B cell (primary cell): ENCODE measurements at regions of chr6 and their contacts with region 1.

Region 1: DNA sequence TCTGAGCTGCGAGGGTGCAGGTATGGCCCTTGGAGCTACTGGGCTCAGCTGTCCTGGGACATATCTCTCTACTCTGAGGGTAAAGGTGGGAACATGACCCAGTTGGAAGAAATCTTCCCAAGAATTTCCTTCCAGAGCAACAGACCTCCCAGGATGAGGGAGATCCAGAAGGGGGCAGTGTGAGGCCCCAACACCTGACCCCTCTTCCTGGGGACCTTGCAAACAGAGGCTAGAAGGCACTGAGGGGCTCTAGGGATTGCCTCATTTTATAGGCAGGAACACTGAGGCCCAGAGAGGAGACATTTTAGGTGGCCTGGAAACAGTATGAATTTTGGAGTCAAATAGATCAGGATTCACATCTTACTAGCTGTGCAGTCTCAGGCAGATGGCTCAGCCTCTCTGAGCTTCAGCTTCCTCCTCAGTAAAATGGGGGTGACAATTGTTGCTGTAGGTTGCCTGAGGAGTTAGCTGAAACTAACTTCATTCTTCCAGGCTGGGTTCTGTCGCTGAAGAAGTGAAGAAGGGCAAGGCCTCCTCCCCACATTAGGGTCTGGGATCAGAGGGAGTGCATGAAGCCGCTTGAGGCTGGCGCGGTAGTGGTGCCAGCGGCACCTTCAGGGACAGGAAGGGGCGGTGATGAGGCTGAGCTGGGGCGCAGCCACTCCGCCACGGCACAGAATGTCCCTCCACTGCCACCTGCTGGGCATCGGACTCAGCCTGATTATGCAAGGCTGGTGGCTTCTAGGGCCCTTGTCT is 11.4 kb downstream of the KCNK17 start:
- DNase-seq: peak; percentile 85
- ATAC-seq: peak; percentile 92
- H3K4me3 ChIP-seq: peak overlapping the region in 1 of 5 experiments; percentile 29
- H3K4me3 Mint-ChIP-seq: peak overlapping the region; percentile 74
- H3K27ac ChIP-seq: no peak overlapping the region
- H3K27ac Mint-ChIP-seq: no peak overlapping the region
- H3K4me1 ChIP-seq: peaks cover 4 to 7% of the 10 kb centered on the region in 2 donors
- H3K4me1 Mint-ChIP-seq: peaks cover 4% of the 10 kb centered on the region
- H3K27me3 ChIP-seq: peaks cover 0 to 4% (median 0%) of the 10 kb centered on the region in 4 experiments
- H3K27me3 Mint-ChIP-seq: peaks cover 13% of the 10 kb centered on the region
- CTCF ChIP-seq: peak; percentile 85

Region 2: GRCh38 chr6:38973178-38974054 is 329.4 kb before region 1 on chr6:
- CTCF ChIA-PET with region 1: interaction called, 10 read pairs
- POLR2A ChIA-PET with region 1: no interaction called
- intact Hi-C with region 1: loop called (anchors 1 kb)
- DNase-seq: peak; percentile 42
- ATAC-seq: peak; percentile 41
- H3K4me3 ChIP-seq: no peak overlapping the region
- H3K4me3 Mint-ChIP-seq: no peak overlapping the region
- H3K27ac ChIP-seq: no peak overlapping the region
- H3K27ac Mint-ChIP-seq: no peak overlapping the region
- H3K4me1 ChIP-seq: no peaks in the 10 kb centered on the region
- H3K4me1 Mint-ChIP-seq: no peaks in the 10 kb centered on the region
- H3K27me3 ChIP-seq: peaks cover 0 to under 1% (median 0%) of the 10 kb centered on the region in 4 experiments
- H3K27me3 Mint-ChIP-seq: peaks cover 11% of the 10 kb centered on the region
- CTCF ChIP-seq: peak; percentile 58

Region 3: GRCh38 chr6:38997128-38997761 is 305.6 kb before region 1 on chr6:
- CTCF ChIA-PET with region 1: interaction called, 21 read pairs
- POLR2A ChIA-PET with region 1: no interaction called
- intact Hi-C with region 1: no loop called
- DNase-seq: peak; percentile 27
- ATAC-seq: no peak
- H3K4me3 ChIP-seq: no peak overlapping the region
- H3K4me3 Mint-ChIP-seq: no peak overlapping the region
- H3K27ac ChIP-seq: no peak overlapping the region
- H3K27ac Mint-ChIP-seq: no peak overlapping the region
- H3K4me1 ChIP-seq: no peaks in the 10 kb centered on the region
- H3K4me1 Mint-ChIP-seq: no peaks in the 10 kb centered on the region
- H3K27me3 ChIP-seq: peaks cover 0 to 9% (median 2%) of the 10 kb centered on the region in 4 experiments
- H3K27me3 Mint-ChIP-seq: peaks cover 36% of the 10 kb centered on the region
- CTCF ChIP-seq: peak; percentile 60

Region 4: DNA sequence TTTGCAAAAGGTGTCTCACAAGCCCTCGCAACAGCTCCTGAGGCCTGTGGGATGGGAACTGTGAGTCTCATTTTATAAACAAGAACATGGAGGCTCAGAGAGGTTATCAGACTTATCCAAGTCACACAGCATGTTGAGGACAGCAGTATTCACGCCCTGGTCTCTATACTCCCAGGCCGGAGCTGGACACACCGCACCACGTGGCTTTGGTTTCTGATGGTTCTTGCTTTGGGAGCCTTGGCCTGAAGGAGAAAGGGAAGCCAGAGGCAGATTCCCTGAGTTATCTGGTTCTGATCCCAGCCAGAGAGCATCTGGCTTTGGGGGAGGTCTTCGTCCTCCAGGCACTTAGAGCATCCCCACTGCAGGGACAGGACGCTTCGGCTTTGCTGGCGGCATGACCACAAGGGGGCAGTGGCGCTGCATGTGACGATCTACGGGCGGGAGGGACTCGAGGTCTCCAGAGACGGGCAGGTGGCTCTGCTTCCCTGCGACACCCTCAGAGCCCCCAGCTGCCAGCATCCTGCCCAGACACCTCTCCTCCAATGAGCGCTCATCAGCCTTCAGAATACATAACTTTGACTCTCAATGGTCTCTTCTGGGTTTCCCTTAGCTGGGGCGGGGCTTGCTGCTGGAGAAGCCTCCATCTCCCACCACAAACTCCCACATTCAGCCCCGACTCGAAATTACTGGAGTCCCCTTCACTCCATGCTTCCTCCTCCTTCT is 136.5 kb before region 1 on chr6:
- CTCF ChIA-PET with region 1: interaction called, 241 read pairs
- POLR2A ChIA-PET with region 1: no interaction called
- intact Hi-C with region 1: no loop called
- DNase-seq: peak; percentile 83
- ATAC-seq: peak; percentile 78
- H3K4me3 ChIP-seq: no peak overlapping the region
- H3K4me3 Mint-ChIP-seq: no peak overlapping the region
- H3K27ac ChIP-seq: no peak overlapping the region
- H3K27ac Mint-ChIP-seq: no peak overlapping the region
- H3K4me1 ChIP-seq: peaks cover 0 to 7% of the 10 kb centered on the region in 2 donors
- H3K4me1 Mint-ChIP-seq: peaks cover 5% of the 10 kb centered on the region
- H3K27me3 ChIP-seq: peaks cover 0 to 8% (median 3%) of the 10 kb centered on the region in 4 experiments
- H3K27me3 Mint-ChIP-seq: peaks cover 33% of the 10 kb centered on the region
- CTCF ChIP-seq: peak; percentile 93

Region 5: DNA sequence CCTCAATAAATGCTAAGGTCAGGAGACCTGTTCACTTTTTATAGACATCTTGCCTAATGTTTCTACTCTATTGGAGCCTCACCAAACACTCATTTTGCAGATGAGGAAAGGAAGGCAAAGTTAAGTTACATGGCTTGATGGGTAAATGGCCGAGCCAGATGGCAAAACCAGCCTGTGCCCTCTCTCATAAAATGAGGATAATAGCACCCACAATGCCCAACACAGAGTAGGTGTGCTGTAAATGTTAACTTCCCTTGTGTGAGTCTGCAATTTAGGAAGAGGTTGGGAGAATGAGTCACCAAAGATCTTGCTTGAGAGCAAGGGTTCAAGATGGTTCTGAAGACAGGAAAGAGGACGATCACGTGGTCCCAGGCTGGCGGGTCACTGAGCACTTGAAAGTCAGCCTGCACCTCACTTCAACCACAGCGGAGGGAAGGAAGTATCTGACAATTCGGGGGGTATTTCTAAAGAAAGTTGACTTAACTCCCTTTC is 76.9 kb before region 1 on chr6:
- CTCF ChIA-PET with region 1: no interaction called
- POLR2A ChIA-PET with region 1: no interaction called
- intact Hi-C with region 1: no loop called
- DNase-seq: no peak
- ATAC-seq: no peak
- H3K4me3 ChIP-seq: no peak overlapping the region
- H3K4me3 Mint-ChIP-seq: no peak overlapping the region
- H3K27ac ChIP-seq: no peak overlapping the region
- H3K27ac Mint-ChIP-seq: no peak overlapping the region
- H3K4me1 ChIP-seq: peaks cover 15 to 17% of the 10 kb centered on the region in 2 donors
- H3K4me1 Mint-ChIP-seq: peaks cover 14% of the 10 kb centered on the region
- H3K27me3 ChIP-seq: peaks cover 0 to 41% (median 21%) of the 10 kb centered on the region in 4 experiments
- H3K27me3 Mint-ChIP-seq: peaks cover 74% of the 10 kb centered on the region
- CTCF ChIP-seq: no peak

Region 6: GRCh38 chr6:39361657-39362486 is 59.0 kb after region 1 on chr6:
- CTCF ChIA-PET with region 1: no interaction called
- POLR2A ChIA-PET with region 1: no interaction called
- intact Hi-C with region 1: no loop called
- DNase-seq: peak; percentile 67
- ATAC-seq: peak; percentile 63
- H3K4me3 ChIP-seq: no peak overlapping the region
- H3K4me3 Mint-ChIP-seq: no peak overlapping the region
- H3K27ac ChIP-seq: no peak overlapping the region
- H3K27ac Mint-ChIP-seq: no peak overlapping the region
- H3K4me1 ChIP-seq: peaks cover 3% of the 10 kb centered on the region in 2 donors
- H3K4me1 Mint-ChIP-seq: no peaks in the 10 kb centered on the region
- H3K27me3 ChIP-seq: no peaks in the 10 kb centered on the region
- H3K27me3 Mint-ChIP-seq: peaks cover 13% of the 10 kb centered on the region
- CTCF ChIP-seq: peak; percentile 83